ENCODE measurements at regions of chr5 and their contacts with region 1.

Region 1: DNA sequence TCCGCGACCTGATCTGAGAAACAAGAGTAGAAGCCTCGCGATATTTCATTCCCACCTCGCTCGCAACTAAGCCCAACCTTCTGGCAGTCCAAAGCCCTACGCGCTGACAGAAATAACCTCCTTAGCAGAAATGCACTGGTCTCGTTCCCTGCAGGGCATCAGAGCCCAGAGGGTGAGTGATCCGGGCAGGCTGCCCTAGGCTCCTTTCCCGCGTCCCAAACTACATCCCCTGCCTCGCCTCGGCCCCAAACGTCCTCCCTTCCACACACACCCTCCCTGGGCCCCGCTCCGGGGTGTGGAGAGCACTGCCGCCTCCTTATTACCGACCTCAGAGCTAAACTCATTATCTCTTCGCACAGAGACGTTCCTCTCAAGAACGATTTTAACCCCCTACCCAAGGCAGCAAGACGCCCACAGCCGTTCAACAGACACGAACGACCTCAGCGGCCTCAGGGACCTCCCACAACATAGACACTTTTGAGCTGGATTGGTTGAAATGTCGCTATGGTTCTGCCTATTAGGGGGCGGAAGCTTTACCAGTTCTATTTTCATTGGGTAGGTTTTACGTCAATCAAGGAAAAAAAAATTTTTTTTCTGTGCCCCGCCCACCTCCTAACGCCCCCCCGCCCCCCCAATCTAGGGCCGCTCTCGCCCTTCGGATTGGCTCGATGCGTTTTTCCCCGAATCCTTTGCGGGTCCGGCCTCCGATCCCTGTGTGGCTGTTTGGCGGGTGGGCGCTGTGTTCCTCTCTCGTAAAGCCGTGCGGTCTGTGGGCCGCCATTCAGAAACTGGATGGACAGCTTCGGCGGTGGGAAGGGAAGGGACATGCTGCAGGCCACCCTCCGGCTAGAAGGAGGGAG is at the start of gene CETN3:
- DNase-seq: peak; percentile 80 to 95
- H3K4me3 ChIP-seq: peak within 1 kb of the TSS; percentile 89 to 97
- H3K27ac ChIP-seq: peak within 1 kb of the TSS; percentile 95 to 98
- H3K4me1 ChIP-seq: peaks cover 0 to 5% of the 10 kb centered on the region in 2 donors
- H3K27me3 ChIP-seq: no peaks in the 10 kb centered on the region
- CTCF ChIP-seq: no peak
- total RNA-seq, gene CETN3: 36.7 TPM

Region 2: DNA sequence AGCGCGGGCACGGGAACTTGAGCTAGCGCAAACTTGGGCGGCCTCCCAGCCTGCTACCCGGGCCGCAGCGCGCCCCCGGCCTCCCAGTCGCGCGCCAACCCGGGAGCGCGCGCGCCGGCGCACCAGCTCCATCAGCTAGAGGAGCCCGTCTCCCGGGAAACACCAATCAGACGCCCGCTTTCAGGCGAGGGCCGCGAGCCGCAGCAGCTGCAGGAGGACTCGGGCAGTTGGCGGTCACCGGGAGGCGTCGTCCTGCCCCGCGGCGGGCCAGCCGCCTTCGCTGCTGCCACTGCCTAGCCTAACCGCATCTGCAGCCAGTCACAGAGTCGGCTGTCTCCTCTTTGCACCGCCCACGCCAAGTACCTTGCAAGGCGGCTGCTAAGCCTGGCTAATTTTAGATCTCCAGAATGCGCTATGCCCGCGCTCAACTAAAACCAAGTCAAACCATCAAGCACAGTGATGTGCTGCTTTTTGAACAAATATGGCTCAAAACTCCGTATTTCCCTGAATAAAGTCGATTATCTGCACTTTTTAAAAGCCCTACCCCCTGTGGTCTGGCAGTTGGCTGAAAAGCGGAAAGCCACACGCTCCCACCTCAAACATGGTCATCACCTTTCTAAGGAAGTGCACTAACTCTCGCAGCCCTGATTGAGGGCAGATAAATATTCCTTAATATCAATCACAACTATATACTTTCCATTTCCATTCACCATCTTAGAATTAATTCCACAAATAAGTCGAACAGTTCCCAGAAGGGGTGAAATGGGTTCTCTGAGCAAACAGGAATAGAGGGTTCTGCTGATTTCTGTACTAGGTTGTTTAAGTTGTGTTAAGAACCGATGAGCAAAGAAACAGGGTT is 1748.4 kb before region 1 on chr5:
- intact Hi-C with region 1: loop called (anchors 5 kb)
- DNase-seq: peak in 1 of 2 donors; percentile 81
- H3K4me3 ChIP-seq: peak overlapping the region; percentile 36 to 60
- H3K27ac ChIP-seq: no peak overlapping the region
- H3K4me1 ChIP-seq: peaks cover 0 to 7% of the 10 kb centered on the region in 2 donors
- H3K27me3 ChIP-seq: peaks cover 11% of the 10 kb centered on the region
- CTCF ChIP-seq: no peak

Region 3: DNA sequence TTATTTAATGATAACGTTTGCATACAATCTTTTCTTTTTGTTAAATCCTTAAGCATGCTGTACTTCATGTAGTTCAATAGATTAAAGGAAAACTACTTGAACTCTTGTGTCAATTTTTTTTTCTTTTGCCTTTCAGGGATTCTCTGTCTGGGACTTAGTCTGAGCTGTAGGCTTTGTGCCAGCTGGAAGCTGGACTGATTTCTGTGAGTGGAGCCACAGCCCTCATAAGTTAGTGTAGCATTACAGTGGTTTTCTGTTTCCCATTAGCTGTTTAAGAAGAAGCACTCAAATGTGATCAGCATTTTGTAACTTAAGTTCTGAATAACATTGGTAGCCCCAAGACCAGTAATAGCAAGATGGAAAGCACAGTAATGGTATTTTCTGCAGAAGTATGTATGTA is 1196.0 kb before region 1 on chr5:
- intact Hi-C with region 1: loop called (anchors 5 kb)
- DNase-seq: no peak
- H3K4me3 ChIP-seq: no peak overlapping the region
- H3K27ac ChIP-seq: no peak overlapping the region
- H3K4me1 ChIP-seq: no peaks in the 10 kb centered on the region
- H3K27me3 ChIP-seq: no peaks in the 10 kb centered on the region
- CTCF ChIP-seq: no peak

Region 4: GRCh38 chr5:90368454-90369246 is 40.9 kb before region 1 on chr5:
- intact Hi-C with region 1: no loop called
- DNase-seq: no peak
- H3K4me3 ChIP-seq: no peak overlapping the region
- H3K27ac ChIP-seq: no peak overlapping the region
- H3K4me1 ChIP-seq: no peaks in the 10 kb centered on the region
- H3K27me3 ChIP-seq: no peaks in the 10 kb centered on the region
- CTCF ChIP-seq: no peak

Region 5: GRCh38 chr5:90474235-90475109 is 64.9 kb after region 1 on chr5 and contains the starts of genes MBLAC2 and POLR3G:
- intact Hi-C with region 1: loop called (anchors 5 kb)
- DNase-seq: peak; percentile 48 to 92
- H3K4me3 ChIP-seq: peak within 1 kb of the TSS; percentile 67 to 81
- H3K27ac ChIP-seq: peak within 1 kb of the TSS in 1 of 2 donors; percentile 2
- H3K4me1 ChIP-seq: peaks cover 0 to 13% of the 10 kb centered on the region in 2 donors
- H3K27me3 ChIP-seq: no peaks in the 10 kb centered on the region
- CTCF ChIP-seq: peak; percentile 5 to 26 (median 19)
- total RNA-seq, gene MBLAC2: 4.7 TPM
- total RNA-seq, gene POLR3G: 1.5 TPM